ENCODE measurements at regions of chr4 and their contacts with region 1.

Region 1: GRCh38 chr4:119041951-119042560 is 93.6 kb upstream of the MYOZ2 start:
- DNase-seq: peak; percentile 83
- ATAC-seq: peak; percentile 63
- H3K4me3 ChIP-seq: no peak overlapping the region
- H3K27ac ChIP-seq: peak overlapping the region; percentile 100; the same call in 1 of the 2 replicates
- H3K4me1 ChIP-seq: peaks cover 12% of the 10 kb centered on the region
- H3K27me3 ChIP-seq: no peaks in the 10 kb centered on the region
- CTCF ChIP-seq: peak; percentile 77
- POLR2A ChIP-seq: no peak
- RAD21 ChIP-seq: peak; percentile 83

Region 2: DNA sequence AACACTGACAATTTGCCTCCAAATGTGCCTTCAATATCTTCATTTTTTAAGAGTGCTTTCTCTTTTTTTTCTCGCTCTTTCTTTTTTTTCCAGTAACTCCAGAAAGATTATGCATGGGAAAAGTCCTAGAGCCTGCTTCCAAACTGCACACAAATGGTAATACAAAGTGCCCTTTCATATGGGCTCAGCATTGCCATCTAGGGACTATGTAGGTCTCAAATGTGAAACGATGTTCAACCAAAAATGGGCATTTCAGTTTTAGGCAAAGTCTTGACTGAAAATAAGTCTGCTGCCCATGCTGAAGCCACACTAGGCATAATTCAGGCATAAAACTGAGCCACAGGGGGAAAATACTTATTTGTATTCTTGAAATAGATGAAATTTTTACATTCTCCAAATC is 87.8 kb before region 1 on chr4:
- CTCF ChIA-PET with region 1: no interaction called
- POLR2A ChIA-PET with region 1: no interaction called
- dilution Hi-C with region 1: no loop called
- in situ Hi-C with region 1: no loop called
- intact Hi-C with region 1: no loop called
- DNase-seq: peak; percentile 42
- ATAC-seq: peak; percentile 72
- H3K4me3 ChIP-seq: no peak overlapping the region
- H3K27ac ChIP-seq: no peak overlapping the region
- H3K4me1 ChIP-seq: no peaks in the 10 kb centered on the region
- H3K27me3 ChIP-seq: no peaks in the 10 kb centered on the region
- CTCF ChIP-seq: peak; percentile 42
- POLR2A ChIP-seq: no peak
- RAD21 ChIP-seq: peak; percentile 41; the same call in 1 of the 2 replicates

Region 3: DNA sequence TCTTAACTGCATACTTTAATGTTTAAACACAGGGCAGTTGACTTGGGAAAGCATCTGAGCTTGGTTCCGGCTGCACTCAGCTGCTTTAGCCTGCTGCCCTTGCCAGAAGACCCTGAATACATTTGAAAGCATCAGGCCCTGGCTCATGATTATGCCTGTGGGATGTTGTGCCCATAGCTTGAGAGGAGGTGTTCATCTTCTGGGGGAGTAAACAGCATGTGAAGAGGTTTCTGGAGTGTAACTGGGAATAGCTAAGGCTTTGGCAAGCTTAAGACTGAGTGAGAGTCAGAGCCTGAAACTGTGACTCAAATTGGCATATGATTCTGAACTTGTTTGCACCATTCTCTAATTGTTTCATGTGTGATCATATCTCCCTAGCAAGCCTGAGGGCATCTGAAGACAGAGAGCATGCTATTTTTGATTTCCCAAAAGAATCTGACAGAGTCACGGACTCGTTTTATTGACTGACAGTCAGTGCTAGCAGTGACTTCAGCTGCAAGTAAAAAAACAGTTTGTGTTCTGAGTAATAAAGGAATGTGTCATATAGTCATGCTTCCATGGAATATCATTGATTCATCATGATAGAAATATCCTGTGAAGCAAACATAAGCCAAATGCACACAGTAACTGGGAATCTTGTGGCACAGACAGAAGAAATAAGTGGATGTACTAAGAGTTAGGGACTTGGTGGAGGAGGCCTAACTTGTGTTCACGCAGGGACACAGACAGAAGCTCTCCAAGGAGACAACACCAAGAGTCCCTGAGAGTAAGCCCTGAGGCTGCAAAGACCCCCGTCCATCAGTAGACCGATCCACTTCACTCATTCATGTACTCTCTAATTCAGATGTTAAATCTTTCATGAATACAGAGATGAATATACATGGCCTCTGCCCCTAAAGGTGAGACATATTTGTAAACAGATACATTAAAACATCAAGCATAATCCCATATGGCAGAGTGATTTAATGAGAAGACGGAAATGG is 52.7 kb before region 1 on chr4:
- CTCF ChIA-PET with region 1: interaction called, 5 read pairs
- POLR2A ChIA-PET with region 1: interaction called, 13 read pairs
- dilution Hi-C with region 1: no loop called
- in situ Hi-C with region 1: no loop called
- intact Hi-C with region 1: loop called (anchors 1 kb)
- DNase-seq: peak; percentile 96
- ATAC-seq: peak; percentile 63
- H3K4me3 ChIP-seq: no peak overlapping the region
- H3K27ac ChIP-seq: peak overlapping the region; percentile 99
- H3K4me1 ChIP-seq: peaks cover 26% of the 10 kb centered on the region
- H3K27me3 ChIP-seq: no peaks in the 10 kb centered on the region
- CTCF ChIP-seq: no peak
- POLR2A ChIP-seq: no peak
- RAD21 ChIP-seq: no peak

Region 4: DNA sequence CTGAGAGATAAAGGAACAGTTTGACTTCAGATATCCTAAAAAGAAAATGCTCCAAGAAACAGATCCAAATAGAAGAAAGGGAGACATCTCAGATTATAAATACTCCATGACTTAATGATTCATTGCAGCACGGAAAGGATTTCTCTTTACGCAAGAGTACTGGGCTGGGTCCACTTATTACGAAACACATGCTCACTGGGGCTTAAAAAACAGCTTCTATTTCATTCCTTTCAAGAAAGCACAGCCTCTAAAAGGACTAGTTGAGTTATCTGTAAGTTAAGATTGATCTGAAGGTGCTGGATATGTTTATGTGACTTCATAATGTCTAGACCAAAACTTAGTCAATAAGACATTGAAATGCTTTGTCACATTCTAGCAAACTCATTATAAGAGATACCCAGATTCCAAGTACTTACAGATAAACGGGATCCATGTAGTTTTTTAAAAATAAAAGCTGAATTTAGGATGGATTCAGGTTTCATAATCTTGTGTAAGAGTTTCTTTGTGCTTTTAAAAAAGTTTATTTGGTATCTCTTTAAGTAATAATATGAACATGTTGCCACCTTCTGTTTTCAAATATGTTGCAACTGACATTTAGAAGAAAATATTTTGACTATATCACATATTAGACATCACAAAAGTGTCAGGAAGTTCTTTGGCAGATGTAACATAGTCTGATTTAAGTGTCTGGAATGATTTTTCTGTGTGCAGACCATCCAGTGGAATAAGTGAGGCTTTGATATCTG is 16.0 kb before region 1 on chr4:
- CTCF ChIA-PET with region 1: interaction called, 15 read pairs
- POLR2A ChIA-PET with region 1: no interaction called
- dilution Hi-C with region 1: no loop called
- in situ Hi-C with region 1: no loop called
- intact Hi-C with region 1: no loop called
- DNase-seq: peak; percentile 93
- ATAC-seq: peak; percentile 68
- H3K4me3 ChIP-seq: no peak overlapping the region
- H3K27ac ChIP-seq: peak overlapping the region; percentile 89
- H3K4me1 ChIP-seq: peaks cover 11% of the 10 kb centered on the region
- H3K27me3 ChIP-seq: no peaks in the 10 kb centered on the region
- CTCF ChIP-seq: no peak
- POLR2A ChIP-seq: no peak
- RAD21 ChIP-seq: no peak

Region 5: DNA sequence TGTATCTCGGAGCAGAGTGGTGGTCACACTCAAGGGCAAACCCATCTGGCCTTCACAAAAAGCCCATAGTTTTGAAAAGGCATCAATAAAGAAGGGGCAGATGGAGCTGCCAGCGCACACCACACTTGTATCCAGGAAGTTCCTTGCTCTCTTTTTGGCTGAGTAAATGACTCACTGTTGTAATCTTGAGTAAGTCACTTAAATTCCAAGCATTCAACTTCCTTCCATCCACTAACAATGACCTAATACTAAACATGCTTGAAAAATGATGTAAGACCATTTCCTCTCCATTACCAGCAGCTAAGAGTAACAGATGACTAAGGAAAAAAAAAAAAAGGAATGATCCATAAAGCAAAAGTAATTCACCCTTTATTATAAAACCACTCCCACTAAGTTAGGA is 61.2 kb after region 1 on chr4:
- CTCF ChIA-PET with region 1: interaction called, 3 read pairs
- POLR2A ChIA-PET with region 1: no interaction called
- dilution Hi-C with region 1: no loop called
- in situ Hi-C with region 1: no loop called
- intact Hi-C with region 1: loop called (anchors 5 kb)
- DNase-seq: peak; percentile 99
- ATAC-seq: peak; percentile 73
- H3K4me3 ChIP-seq: no peak overlapping the region
- H3K27ac ChIP-seq: peak overlapping the region; percentile 95
- H3K4me1 ChIP-seq: peaks cover 13% of the 10 kb centered on the region; the same call in 1 of the 2 replicates
- H3K27me3 ChIP-seq: no peaks in the 10 kb centered on the region
- CTCF ChIP-seq: no peak
- POLR2A ChIP-seq: no peak
- RAD21 ChIP-seq: no peak

Region 6: DNA sequence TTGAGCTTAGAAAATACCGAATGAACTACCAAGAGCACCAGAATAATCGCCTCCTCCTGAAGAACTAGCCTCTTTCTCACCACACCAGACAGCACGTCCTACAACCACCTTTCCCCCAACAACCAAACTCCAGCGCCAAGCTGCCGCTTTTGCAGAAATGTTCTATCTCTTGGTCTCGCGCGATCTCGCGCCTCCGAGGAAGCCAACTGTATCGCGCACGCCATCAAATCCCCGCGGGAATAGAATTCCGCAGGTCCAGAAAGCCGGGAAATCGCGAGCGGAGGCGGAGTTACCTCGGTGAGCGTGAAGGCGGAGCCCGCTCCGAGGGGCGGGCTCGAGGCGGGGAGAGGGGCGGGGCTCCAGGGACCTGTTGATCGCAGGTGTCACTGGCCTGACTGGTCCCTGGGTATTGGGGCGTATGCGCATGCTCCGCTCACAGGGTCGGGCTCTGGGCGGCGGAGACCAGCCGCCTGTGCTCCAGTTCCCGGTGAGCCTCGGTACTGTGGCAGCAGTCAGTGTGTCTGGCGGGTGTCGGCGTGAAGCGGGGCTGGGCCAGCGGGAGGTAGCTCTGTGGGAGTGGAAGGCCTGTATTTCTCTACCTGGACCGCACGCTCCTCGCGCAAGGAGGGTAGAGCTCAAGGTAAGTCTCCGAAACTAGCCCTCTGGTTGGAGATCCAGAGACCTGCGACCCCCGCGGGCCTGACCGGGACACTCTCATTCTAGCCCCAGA is 170.3 kb after region 1 on chr4 and contains the start of gene USP53:
- CTCF ChIA-PET with region 1: interaction called, 5 read pairs
- POLR2A ChIA-PET with region 1: interaction called, 6 read pairs
- dilution Hi-C with region 1: no loop called
- in situ Hi-C with region 1: loop called (anchors 10 kb)
- intact Hi-C with region 1: loop called (anchors 1 kb)
- DNase-seq: peak; percentile 97
- ATAC-seq: peak; percentile 93
- H3K4me3 ChIP-seq: peak within 1 kb of the TSS; percentile 74
- H3K27ac ChIP-seq: peak within 1 kb of the TSS; percentile 90
- H3K4me1 ChIP-seq: peaks cover 3% of the 10 kb centered on the region; the same call in 1 of the 2 replicates
- H3K27me3 ChIP-seq: no peaks in the 10 kb centered on the region
- CTCF ChIP-seq: no peak
- POLR2A ChIP-seq: peak; percentile 97
- RAD21 ChIP-seq: peak; percentile 25
- total RNA-seq, gene USP53: 24.0 and 34.7 TPM in 2 replicates

Region 7: GRCh38 chr4:119286377-119287002 is 244.4 kb after region 1 on chr4:
- CTCF ChIA-PET with region 1: interaction called, 4 read pairs
- POLR2A ChIA-PET with region 1: no interaction called
- dilution Hi-C with region 1: no loop called
- in situ Hi-C with region 1: loop called (anchors 5 kb)
- intact Hi-C with region 1: loop called (anchors 1 kb)
- DNase-seq: peak; percentile 83
- ATAC-seq: peak; percentile 53; the same call in 1 of the 2 replicates
- H3K4me3 ChIP-seq: no peak overlapping the region
- H3K27ac ChIP-seq: no peak overlapping the region; the same call in 1 of the 2 replicates
- H3K4me1 ChIP-seq: no peaks in the 10 kb centered on the region
- H3K27me3 ChIP-seq: no peaks in the 10 kb centered on the region
- CTCF ChIP-seq: peak; percentile 70
- POLR2A ChIP-seq: no peak
- RAD21 ChIP-seq: peak; percentile 79

Region 8: GRCh38 chr4:120056246-120056645 is 1014.2 kb after region 1 on chr4:
- CTCF ChIA-PET with region 1: no interaction called
- POLR2A ChIA-PET with region 1: no interaction called
- dilution Hi-C with region 1: no loop called
- in situ Hi-C with region 1: no loop called
- intact Hi-C with region 1: loop called (anchors 5 kb)
- DNase-seq: peak; percentile 70
- ATAC-seq: peak; percentile 71
- H3K4me3 ChIP-seq: no peak overlapping the region
- H3K27ac ChIP-seq: no peak overlapping the region
- H3K4me1 ChIP-seq: peaks cover 7% of the 10 kb centered on the region
- H3K27me3 ChIP-seq: no peaks in the 10 kb centered on the region
- CTCF ChIP-seq: peak; percentile 55
- POLR2A ChIP-seq: no peak
- RAD21 ChIP-seq: peak; percentile 64

Measured in IMR-90 (cell line).